ENCODE measurements at regions of chr10 and their contacts with region 1.

Region 1: DNA sequence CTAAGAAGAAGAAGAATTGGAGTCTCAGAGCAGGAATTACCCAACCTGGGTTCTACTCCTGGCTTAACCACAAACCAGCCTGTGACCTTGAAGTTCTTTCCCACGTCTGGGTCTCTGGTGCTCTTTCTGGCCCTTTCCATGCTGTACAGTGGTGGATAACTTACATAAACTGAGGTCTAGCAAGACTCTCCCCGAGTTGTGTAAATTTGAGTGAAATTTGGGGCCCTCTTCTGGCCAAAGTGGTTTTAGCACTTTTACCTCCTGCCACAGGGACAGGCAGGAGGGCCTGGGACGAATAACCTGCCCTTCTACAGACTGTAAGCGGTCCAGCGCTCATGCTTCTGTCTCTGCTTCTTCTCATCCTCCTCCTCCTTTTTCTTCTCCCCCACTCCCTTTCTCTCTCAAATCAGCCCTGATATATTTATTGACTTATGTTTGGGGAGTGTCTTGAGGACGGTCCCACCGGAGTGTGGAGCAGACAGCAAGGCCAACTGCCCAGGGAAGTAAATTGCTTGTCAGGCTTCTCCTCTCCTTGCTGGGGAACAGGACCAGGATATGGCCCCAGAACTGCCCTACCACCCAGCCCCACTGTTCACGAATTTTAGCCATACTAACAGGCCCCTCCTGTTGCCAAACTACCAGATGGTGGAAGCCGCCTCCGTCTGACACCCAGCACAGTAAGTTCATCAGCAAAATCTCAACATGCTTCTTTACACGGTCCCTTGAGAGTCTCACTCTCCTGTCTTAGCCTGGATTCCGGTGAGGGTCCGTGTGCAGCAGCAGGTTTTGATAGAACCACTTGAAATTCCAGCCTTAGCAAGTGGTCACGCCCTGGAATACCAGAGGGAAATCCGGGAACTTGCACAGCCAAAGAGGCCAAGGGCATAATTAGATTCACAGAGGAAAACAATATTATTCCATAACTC is 4.0 kb upstream of the SH3PXD2A start:
- DNase-seq: peak in 1 of 2 donors; percentile 73
- H3K4me3 ChIP-seq: no peak overlapping the region
- H3K27ac ChIP-seq: no peak overlapping the region
- H3K4me1 ChIP-seq: peaks cover 0 to 28% (median 16%) of the 10 kb centered on the region in 4 donors
- H3K27me3 ChIP-seq: no peaks in the 10 kb centered on the region
- CTCF ChIP-seq: peak; percentile 64 to 84

Region 2: GRCh38 chr10:103605359-103606095 is 253.9 kb before region 1 on chr10:
- intact Hi-C with region 1: loop called (anchors 10 kb)
- DNase-seq: peak; percentile 65 to 86
- H3K4me3 ChIP-seq: no peak overlapping the region
- H3K27ac ChIP-seq: no peak overlapping the region
- H3K4me1 ChIP-seq: peaks cover 0 to 19% (median 15%) of the 10 kb centered on the region in 4 donors
- H3K27me3 ChIP-seq: no peaks in the 10 kb centered on the region
- CTCF ChIP-seq: peak; percentile 81 to 95

Region 3: GRCh38 chr10:103712570-103713498 is 146.6 kb before region 1 on chr10:
- intact Hi-C with region 1: loop called (anchors 2 kb)
- DNase-seq: peak; percentile 87 to 89
- H3K4me3 ChIP-seq: no peak overlapping the region
- H3K27ac ChIP-seq: no peak overlapping the region
- H3K4me1 ChIP-seq: peaks cover 0 to 19% (median 0%) of the 10 kb centered on the region in 4 donors
- H3K27me3 ChIP-seq: no peaks in the 10 kb centered on the region
- CTCF ChIP-seq: peak; percentile 94 to 98

Measured in tibial artery (tissue), 4 donors.